Heart left ventricle (tissue), 16 donors: ENCODE measurements at regions of chr3 and their contacts with region 1.

Region 1: DNA sequence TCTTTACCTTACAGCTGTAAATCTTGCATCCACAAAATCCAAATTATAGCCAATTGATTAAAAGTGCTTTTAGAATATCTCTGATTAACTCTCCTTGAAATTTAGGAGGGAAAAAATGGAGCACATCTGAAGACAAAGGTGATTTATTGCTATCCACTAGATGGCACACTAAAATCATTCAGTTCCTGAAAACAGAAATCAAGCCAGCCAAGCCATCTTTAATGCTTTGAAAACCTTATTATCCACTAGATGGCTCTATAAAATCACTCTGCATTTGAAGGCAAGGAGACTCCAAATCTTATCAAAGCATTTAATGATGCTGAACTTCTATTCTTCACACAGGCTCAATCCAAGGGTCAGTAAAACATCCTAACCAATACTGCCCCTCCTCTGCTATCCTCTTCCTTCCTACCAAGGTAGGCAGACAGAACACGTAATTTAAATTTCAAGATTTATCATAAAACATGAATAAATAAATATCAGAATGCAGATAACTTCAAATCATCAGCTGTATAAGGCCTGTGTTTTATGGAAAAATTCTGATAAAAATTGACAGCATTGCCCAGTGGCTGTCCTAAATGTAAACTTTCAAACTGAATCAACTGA is 48.4 kb downstream of the GOLIM4 start:
- DNase-seq: no peak
- ATAC-seq: peak; percentile 33 to 67 (median 64)
- H3K4me3 ChIP-seq: no peak overlapping the region
- H3K27ac ChIP-seq: no peak overlapping the region
- H3K4me1 ChIP-seq: peaks cover 0 to 62% (median 34%) of the 10 kb centered on the region in 12 donors
- H3K27me3 ChIP-seq: no peaks in the 10 kb centered on the region
- CTCF ChIP-seq: peak; percentile 67 to 96 (median 90)
- POLR2A ChIP-seq: no peak

Region 2: GRCh38 chr3:167843886-167844285 is 203.4 kb before region 1 on chr3:
- intact Hi-C with region 1: loop called in 1 of 10 experiments (anchors 10 kb)
- DNase-seq: no peak
- ATAC-seq: no peak
- H3K4me3 ChIP-seq: no peak overlapping the region
- H3K27ac ChIP-seq: no peak overlapping the region
- H3K4me1 ChIP-seq: peaks cover 0 to 17% (median 6%) of the 10 kb centered on the region in 12 donors
- H3K27me3 ChIP-seq: no peaks in the 10 kb centered on the region
- CTCF ChIP-seq: no peak
- POLR2A ChIP-seq: no peak

Region 3: GRCh38 chr3:168095611-168096209 is 48.4 kb after region 1 on chr3 and contains the start of gene GOLIM4:
- intact Hi-C with region 1: loop called (anchors 2 to 10 kb)
- DNase-seq: peak; percentile 97 to 99 (median 97)
- ATAC-seq: peak; percentile 95 to 97 (median 96)
- H3K4me3 ChIP-seq: peak within 1 kb of the TSS; percentile 50 to 93 (median 80)
- H3K27ac ChIP-seq: peak within 1 kb of the TSS; percentile 92 to 99 (median 97)
- H3K4me1 ChIP-seq: peaks cover 0 to 45% (median 33%) of the 10 kb centered on the region in 12 donors
- H3K27me3 ChIP-seq: no peaks in the 10 kb centered on the region
- CTCF ChIP-seq: peak in 6 of 12 donors; percentile 8 to 44 (median 24)
- POLR2A ChIP-seq: peak; percentile 70 to 93
- total RNA-seq, gene GOLIM4: 61.7 to 106 (median 66.3) TPM